ENCODE measurements at regions of chr10 and their contacts with region 1.

Region 1: DNA sequence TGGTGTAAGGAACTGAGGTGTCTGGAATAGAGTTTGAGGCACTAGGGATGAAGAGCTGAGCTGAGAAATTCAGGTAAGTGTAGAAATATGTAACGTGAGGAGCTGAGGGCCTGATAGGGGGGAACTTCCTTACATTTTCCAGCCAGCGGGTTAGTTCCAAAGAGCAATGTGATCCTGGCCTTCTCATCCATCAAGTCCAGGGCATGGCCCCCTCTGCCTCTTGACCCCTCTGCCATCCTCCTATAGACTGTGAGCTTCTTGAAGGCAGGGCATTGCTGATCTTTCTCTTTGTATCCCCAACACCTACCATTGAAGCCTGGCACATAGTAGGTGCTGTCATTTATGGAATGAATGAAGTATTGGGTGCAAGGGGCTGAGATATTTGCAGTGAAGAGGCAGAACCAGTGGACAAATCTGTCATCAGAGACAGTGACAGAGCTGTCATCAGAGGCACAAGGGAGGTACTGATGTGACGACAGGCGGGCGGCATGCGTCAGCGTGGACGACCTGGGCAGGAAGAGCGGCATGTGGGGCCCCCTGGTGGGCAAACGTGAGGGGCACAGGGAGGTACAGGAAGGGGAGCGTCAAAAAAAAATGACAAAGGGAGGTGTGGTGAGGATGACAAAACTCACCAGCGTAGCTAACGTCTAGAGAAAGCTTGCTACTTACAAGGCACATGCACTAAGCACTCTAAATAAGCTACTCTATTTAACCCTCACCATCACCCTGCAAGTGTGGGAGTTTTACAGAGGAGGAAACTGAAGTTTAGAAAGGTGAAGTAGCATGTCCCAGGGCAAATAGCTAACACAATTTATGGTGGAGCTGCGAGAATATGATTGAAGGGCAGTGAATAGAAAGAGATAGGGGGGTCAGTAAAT is 5.2 kb upstream of the CAMK2G start:
- DNase-seq: peak; percentile 78

Region 2: GRCh38 chr10:73843271-73843670 is 36.3 kb before region 1 on chr10:
- CTCF ChIA-PET with region 1: interaction called, 25 read pairs
- POLR2A ChIA-PET with region 1: interaction called, 3 read pairs
- DNase-seq: no peak

Region 3: GRCh38 chr10:73848821-73849489 is 30.6 kb before region 1 on chr10:
- CTCF ChIA-PET with region 1: interaction called, 44 read pairs
- POLR2A ChIA-PET with region 1: interaction called, 7 read pairs
- DNase-seq: peak; percentile 89

Region 4: GRCh38 chr10:73940634-73941221 is 61.2 kb after region 1 on chr10:
- CTCF ChIA-PET with region 1: interaction called, 36 read pairs
- POLR2A ChIA-PET with region 1: no interaction called
- DNase-seq: peak; percentile 84

Region 5: GRCh38 chr10:74337330-74338016 is 457.9 kb after region 1 on chr10:
- CTCF ChIA-PET with region 1: no interaction called
- POLR2A ChIA-PET with region 1: no interaction called
- DNase-seq: no peak